Heart right ventricle (tissue), 16 donors: ENCODE measurements at regions of chr20 and their contacts with region 1.

Region 1: DNA sequence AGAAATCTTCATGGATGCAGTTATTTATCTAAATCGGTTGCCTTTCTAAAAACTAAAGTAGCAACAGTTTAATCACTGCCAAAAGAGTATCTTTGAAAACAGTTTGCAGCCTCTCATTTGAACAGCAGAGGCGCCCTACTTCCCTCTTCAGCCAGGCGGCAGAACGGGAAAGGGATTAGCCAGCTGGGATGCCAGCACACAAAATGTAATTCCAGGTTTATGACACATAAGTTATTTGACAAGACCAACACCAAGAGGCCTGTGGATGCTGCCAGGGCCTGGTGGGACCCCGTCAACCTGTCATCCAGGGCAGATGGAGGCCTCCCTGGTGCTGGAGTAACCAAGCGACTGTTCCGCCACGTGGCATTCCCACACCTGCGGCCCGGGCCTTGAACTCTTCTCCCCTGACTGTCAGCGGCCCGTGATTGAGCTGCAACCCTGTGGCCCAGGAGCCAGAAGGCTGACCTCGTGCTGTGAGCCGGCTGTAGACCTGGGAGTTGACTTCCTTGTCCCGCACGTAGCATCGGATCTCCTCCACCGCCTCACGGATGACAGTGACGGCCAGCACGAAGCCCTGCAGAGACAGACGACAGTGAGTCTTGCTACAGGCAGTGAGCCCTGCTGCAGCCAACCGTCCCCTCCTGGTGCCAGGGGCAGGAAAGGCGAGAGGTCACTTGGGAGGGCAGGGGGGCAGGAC is 55.5 kb downstream of the ATP9A start:
- DNase-seq: no peak
- ATAC-seq: no peak
- H3K4me3 ChIP-seq: no peak overlapping the region
- H3K27ac ChIP-seq: no peak overlapping the region
- H3K4me1 ChIP-seq: no peaks in the 10 kb centered on the region
- H3K27me3 ChIP-seq: no peaks in the 10 kb centered on the region
- CTCF ChIP-seq: peak in 1 of 9 donors; percentile 17

Region 2: DNA sequence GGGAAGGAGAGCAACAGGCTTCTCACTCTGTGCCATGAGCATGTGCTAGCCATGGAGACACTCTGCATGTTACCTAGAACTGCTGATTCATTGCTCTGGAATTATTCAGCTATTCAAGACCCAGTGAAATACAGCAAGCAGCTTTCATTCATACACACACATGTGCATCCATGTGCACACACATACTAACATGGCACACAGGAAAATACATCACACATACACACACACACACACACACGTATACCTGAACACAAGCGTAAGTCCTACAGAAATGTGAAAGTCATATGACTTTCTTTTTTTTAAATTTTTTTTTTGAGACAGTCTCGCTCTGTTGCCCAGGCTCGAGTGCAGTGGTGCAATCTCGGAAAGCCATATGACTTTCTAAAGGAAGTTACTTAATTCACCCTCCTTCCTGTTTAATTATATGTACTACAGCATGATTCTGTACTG is 61.9 kb before region 1 on chr20:
- intact Hi-C with region 1: no loop called
- DNase-seq: no peak
- ATAC-seq: no peak
- H3K4me3 ChIP-seq: no peak overlapping the region
- H3K27ac ChIP-seq: peak overlapping the region in 1 of 10 donors; percentile 26
- H3K4me1 ChIP-seq: peaks cover 0 to 21% (median 0%) of the 10 kb centered on the region in 9 donors
- H3K27me3 ChIP-seq: no peaks in the 10 kb centered on the region
- CTCF ChIP-seq: no peak

Region 3: GRCh38 chr20:51738947-51739456 is 26.4 kb after region 1 on chr20:
- intact Hi-C with region 1: loop called in 1 of 10 experiments (anchors 1 kb)
- DNase-seq: no peak
- ATAC-seq: no peak
- H3K4me3 ChIP-seq: no peak overlapping the region
- H3K27ac ChIP-seq: no peak overlapping the region
- H3K4me1 ChIP-seq: peaks cover 0 to 30% (median 4%) of the 10 kb centered on the region in 9 donors
- H3K27me3 ChIP-seq: no peaks in the 10 kb centered on the region
- CTCF ChIP-seq: no peak